ENCODE measurements at regions of chr4 and their contacts with region 1.

Region 1: DNA sequence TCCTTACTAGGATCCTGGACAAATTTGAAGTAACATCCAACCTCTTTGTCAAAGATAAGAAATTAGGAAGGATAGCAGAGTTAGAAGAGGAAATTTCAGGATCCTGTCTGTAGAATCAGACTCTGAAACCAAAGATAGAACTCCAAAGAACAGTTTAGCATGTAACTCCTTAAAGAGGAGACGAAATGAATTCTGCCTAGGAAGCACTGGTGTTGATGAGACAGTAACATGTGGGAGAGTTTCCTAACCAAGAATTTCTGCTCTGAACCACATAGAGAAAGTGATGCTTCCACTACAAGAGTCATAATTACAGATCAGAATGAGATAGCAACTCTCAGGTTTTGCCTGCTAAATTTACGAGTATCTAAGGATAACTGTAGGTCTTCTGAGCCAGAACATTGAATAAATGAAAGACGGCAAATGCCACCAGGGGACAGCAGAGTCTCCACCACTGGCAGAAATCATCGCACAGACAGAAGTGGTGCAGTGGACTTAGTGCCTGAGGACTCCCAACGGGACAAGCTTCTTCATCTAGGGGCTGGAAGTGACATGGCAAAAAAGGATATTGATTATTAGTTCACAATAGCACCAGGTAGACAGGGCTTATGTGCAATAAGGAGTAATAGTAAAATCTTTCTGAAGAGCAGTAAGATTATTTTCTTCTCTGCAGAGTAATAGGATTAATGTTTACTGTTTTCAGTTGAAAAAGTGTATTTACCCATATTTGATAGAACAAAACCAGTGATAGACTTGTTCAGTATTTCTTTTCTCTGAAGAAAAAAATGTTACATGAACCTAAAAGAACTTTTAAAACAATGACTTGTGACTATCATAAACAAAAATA is 6.7 kb upstream of the PPID start:
- DNase-seq: peak; percentile 77
- ATAC-seq: peak; percentile 96

Region 2: GRCh38 chr4:158644760-158645159 is 85.2 kb before region 1 on chr4:
- intact Hi-C with region 1: no loop called
- DNase-seq: no peak
- ATAC-seq: no peak

Region 3: DNA sequence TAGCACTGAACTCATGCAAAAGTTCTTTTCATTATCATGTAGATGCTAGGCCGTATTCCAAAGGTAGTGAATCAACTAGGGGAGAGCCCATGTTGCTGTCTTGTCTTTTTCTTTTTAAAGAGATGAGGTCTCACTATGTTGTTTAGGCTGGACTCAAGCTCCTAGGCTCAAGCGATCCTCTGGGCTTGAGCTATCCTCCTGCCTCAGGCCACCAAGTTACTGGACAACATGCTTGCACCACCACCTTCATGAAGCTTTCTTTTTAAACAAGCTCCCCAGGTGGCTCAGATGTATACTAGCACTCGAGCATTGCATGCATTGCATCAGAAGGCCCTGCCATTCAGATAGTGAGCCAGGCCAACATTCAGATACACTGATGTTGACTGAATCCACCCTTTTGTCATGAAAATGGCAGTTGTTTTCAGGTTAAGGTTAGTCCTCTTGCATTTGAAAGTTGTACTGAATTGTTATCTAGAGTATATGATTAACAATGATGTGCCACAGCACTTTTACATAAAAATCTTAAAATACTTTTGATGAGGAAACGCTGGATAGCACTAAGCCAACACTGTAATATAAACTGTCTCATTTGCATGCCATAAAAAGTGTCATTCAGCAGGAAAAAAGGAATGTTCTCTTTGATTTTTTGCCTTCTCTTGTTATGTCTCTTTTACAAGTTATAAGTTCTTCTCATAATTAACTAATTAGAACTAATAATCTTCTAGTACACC is 115.5 kb after region 1 on chr4:
- intact Hi-C with region 1: loop called (anchors 5 kb)
- DNase-seq: no peak
- ATAC-seq: no peak

Measured in sciatic nerve (tissue), 2 donors.